Mammary epithelial cell (primary cell): ENCODE measurements at regions of chr12 and their contacts with region 1.

Region 1: GRCh38 chr12:103632554-103633216 is 45.6 kb downstream of the STAB2 start:
- DNase-seq: peak; percentile 70
- H3K4me3 ChIP-seq: no peak overlapping the region
- H3K27ac ChIP-seq: no peak overlapping the region
- H3K4me1 ChIP-seq: no peaks in the 10 kb centered on the region
- H3K27me3 ChIP-seq: no peaks in the 10 kb centered on the region
- CTCF ChIP-seq: peak; percentile 99 to 100

Region 2: GRCh38 chr12:102879144-102879763 is 753.4 kb before region 1 on chr12:
- CTCF ChIA-PET with region 1: no interaction called
- dilution Hi-C with region 1: no loop called
- in situ Hi-C with region 1: no loop called
- intact Hi-C with region 1: loop called (anchors 1 kb)
- DNase-seq: peak; percentile 79
- H3K4me3 ChIP-seq: no peak overlapping the region
- H3K27ac ChIP-seq: no peak overlapping the region
- H3K4me1 ChIP-seq: no peaks in the 10 kb centered on the region
- H3K27me3 ChIP-seq: peaks cover 2% of the 10 kb centered on the region
- CTCF ChIP-seq: peak; percentile 46 to 57

Region 3: DNA sequence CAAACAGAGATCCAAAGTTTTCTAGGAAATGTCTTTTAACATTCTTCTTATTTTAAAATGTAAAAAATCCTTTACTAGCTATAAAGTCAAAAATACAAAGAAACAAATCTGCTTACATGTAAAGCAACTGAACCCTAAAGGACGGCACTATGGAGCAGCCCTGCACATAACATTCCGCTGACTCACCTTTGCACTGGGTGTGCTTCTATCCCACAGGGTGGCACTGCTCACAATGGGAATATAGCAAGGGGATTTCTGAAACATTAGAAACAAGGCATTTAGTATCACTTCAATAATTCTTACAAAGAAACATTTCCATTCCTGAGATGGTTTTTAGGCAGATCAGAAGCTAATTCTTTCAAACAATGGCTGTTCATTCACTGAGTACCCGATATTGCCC is 231.3 kb before region 1 on chr12:
- CTCF ChIA-PET with region 1: no interaction called
- dilution Hi-C with region 1: no loop called
- in situ Hi-C with region 1: no loop called
- intact Hi-C with region 1: loop called (anchors 1 kb)
- DNase-seq: peak; percentile 78
- H3K4me3 ChIP-seq: no peak overlapping the region
- H3K27ac ChIP-seq: no peak overlapping the region
- H3K4me1 ChIP-seq: peaks cover 5% of the 10 kb centered on the region
- H3K27me3 ChIP-seq: no peaks in the 10 kb centered on the region
- CTCF ChIP-seq: peak; percentile 56 to 61

Region 4: DNA sequence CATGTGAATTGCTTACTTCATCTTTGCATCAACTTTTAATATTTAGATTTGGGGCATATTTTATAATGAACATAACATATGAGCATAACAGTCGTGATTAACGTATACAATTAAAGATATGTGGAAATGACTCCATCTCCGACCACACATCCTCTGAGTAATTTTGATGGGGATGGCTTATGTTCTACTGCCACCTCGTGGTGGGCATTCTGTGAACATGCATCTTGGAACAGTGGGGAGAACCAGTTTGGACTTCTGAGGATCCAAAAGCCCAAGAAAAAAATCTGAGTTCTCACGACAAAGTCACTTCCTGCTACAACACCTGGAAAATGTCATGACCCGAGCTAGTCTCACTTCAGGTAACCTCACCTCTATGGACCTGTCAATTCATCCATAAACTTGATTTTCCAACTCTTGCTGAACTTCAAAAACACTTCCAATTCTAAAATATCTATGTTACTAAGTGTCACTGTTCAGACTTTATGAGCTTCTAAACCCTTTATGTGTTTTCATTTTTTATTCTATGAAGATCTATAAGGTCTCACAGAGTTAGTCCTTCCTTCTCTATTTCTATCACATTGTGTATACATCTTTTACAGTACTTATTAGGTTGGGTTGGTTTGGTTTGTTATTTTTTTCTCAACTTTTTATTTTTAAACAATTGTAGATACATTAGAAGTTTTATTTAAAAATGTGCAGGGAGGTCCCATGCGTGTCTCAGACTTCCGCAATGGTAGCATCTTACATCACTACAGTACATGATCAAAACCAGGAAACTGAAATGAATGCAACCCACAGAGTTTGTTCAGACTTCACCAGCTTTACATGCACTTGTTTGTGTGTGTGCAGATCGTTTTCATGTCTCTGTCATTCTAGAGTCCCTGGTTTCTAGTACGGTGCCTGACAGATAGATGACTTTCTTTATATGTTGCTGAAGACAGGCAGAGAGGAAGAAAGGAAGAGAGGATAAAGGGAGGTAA is 83.8 kb before region 1 on chr12:
- CTCF ChIA-PET with region 1: interaction called, 5 read pairs
- dilution Hi-C with region 1: no loop called
- in situ Hi-C with region 1: no loop called
- intact Hi-C with region 1: loop called (anchors 1 kb)
- DNase-seq: peak; percentile 73
- H3K4me3 ChIP-seq: no peak overlapping the region
- H3K27ac ChIP-seq: no peak overlapping the region
- H3K4me1 ChIP-seq: no peaks in the 10 kb centered on the region
- H3K27me3 ChIP-seq: no peaks in the 10 kb centered on the region
- CTCF ChIP-seq: peak; percentile 61 to 83

Region 5: DNA sequence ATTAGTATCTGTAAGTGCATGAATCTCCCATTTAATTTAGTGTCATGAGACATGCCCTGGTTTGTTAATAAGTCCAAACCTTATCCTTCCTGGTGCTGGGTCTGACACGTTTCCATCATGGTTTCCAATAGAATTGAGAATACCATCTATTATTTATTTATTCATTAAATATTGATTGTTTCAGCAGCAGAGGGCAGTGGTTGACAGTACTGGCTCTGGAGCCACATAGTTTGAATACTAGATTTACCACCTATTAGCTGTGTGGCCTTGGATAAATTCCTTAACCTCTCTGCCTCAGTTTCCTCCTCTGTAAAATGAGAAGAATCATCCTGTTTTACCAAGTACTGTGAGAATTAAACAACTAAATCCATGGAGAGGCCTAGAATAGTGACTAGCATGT is 46.6 kb before region 1 on chr12:
- CTCF ChIA-PET with region 1: no interaction called
- dilution Hi-C with region 1: no loop called
- in situ Hi-C with region 1: no loop called
- intact Hi-C with region 1: loop called (anchors 2 kb)
- DNase-seq: no peak
- H3K4me3 ChIP-seq: no peak overlapping the region
- H3K27ac ChIP-seq: no peak overlapping the region
- H3K4me1 ChIP-seq: peaks cover 6% of the 10 kb centered on the region
- H3K27me3 ChIP-seq: no peaks in the 10 kb centered on the region
- CTCF ChIP-seq: peak in 1 of 2 donors; percentile 40

Region 6: DNA sequence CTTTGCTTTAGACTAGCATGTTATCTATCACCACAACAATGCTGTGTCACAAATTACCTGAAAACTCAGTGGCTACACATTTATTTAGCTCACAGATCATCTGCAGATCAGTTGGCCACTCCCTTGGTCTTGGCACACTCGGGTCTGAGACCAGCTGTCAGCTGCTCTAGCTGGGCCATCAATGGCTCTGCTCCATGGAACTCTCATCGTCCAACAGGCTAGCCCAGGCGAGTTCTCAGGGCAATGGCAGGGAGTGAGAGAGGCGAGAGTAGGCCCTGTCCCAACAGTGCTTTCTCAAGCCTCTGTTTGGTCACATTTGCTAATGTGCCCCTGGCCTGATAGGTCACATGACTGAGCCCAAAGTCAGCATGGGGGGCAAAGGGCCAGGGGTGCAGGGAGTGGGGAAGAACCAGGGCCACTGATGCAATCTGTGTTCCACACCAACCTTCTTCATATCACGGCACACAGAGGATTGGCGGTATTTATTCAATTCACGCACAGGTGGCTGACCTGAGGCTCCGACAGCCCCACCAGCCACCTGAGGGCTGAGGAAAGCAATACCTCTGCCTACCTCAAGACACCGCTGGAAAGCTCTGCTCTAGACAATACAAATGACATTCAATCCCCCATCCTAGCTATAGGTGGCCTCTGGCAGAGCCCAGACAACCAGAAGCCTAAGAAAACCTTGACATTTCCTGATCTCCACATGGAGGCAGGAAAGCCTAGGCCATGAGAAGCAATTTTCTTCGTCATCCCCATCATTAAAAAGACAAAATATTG is 125.8 kb after region 1 on chr12:
- CTCF ChIA-PET with region 1: no interaction called
- dilution Hi-C with region 1: no loop called
- in situ Hi-C with region 1: no loop called
- intact Hi-C with region 1: no loop called
- DNase-seq: no peak
- H3K4me3 ChIP-seq: no peak overlapping the region
- H3K27ac ChIP-seq: no peak overlapping the region
- H3K4me1 ChIP-seq: peaks cover 3% of the 10 kb centered on the region
- H3K27me3 ChIP-seq: no peaks in the 10 kb centered on the region
- CTCF ChIP-seq: no peak

Region 7: DNA sequence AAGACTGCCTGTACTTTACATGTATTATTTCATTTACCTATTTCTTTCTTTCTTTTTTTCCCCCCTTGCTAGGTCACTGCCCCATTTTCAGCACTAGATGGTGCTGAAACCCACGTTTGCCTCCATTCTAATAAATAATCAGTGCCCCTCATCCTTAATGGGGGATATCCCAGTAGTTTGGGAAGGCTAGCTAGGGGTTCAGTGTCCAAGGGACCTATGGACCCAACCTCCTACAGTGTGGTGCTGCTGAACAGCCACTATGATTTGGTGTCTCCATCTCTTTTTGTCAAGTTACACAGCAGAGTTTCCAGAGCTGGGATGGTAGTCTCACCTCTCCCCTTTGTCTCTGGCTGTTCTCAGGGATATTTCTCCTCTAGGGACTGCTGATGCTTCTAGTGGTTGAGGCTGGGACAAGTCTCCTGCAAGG is 425.1 kb after region 1 on chr12:
- CTCF ChIA-PET with region 1: no interaction called
- dilution Hi-C with region 1: no loop called
- in situ Hi-C with region 1: no loop called
- intact Hi-C with region 1: no loop called
- DNase-seq: no peak
- H3K4me3 ChIP-seq: no peak overlapping the region
- H3K27ac ChIP-seq: no peak overlapping the region
- H3K4me1 ChIP-seq: peaks cover 24% of the 10 kb centered on the region
- H3K27me3 ChIP-seq: no peaks in the 10 kb centered on the region
- CTCF ChIP-seq: peak; percentile 80 to 86